ENCODE measurements at regions of chr14 and their contacts with region 1.

Region 1: DNA sequence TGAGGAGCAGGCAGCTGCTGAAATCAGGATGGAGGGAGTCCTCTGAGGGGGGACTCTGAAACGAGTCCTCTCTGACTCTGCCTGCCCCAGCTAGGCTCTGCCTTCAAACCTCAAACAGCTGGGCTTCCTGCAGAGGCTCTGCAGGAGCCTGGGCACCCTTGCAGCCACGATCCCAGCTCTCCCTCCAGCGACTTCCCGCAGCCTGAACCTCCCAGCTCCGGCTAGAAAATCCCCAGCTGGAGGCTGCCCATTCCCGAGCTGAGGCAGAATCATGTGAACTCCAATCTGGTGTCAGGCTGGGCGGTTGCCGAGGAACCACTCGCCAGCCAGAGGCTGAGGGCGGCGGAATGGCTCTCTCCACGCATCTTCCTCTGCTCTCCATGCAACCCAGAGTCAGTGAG is at the start of gene GPR68:
- DNase-seq: peak; percentile 51
- H3K4me3 Mint-ChIP-seq: peak within 1 kb of the TSS; percentile 73
- H3K27ac Mint-ChIP-seq: peak within 1 kb of the TSS; percentile 84
- H3K4me1 Mint-ChIP-seq: peaks cover 93% of the 10 kb centered on the region
- H3K27me3 Mint-ChIP-seq: no peaks in the 10 kb centered on the region
- total RNA-seq, gene GPR68: 6.5 to 6.9 TPM

Region 2: GRCh38 chr14:91114079-91115065 is 130.1 kb before region 1 on chr14:
- CTCF ChIA-PET with region 1: interaction called, 4 read pairs
- POLR2A ChIA-PET with region 1: interaction called, 23 read pairs
- intact Hi-C with region 1: no loop called
- DNase-seq: peak; percentile 81
- H3K4me3 Mint-ChIP-seq: peak overlapping the region; percentile 83
- H3K27ac Mint-ChIP-seq: peak overlapping the region; percentile 94
- H3K4me1 Mint-ChIP-seq: peaks cover 66% of the 10 kb centered on the region
- H3K27me3 Mint-ChIP-seq: no peaks in the 10 kb centered on the region

Region 3: DNA sequence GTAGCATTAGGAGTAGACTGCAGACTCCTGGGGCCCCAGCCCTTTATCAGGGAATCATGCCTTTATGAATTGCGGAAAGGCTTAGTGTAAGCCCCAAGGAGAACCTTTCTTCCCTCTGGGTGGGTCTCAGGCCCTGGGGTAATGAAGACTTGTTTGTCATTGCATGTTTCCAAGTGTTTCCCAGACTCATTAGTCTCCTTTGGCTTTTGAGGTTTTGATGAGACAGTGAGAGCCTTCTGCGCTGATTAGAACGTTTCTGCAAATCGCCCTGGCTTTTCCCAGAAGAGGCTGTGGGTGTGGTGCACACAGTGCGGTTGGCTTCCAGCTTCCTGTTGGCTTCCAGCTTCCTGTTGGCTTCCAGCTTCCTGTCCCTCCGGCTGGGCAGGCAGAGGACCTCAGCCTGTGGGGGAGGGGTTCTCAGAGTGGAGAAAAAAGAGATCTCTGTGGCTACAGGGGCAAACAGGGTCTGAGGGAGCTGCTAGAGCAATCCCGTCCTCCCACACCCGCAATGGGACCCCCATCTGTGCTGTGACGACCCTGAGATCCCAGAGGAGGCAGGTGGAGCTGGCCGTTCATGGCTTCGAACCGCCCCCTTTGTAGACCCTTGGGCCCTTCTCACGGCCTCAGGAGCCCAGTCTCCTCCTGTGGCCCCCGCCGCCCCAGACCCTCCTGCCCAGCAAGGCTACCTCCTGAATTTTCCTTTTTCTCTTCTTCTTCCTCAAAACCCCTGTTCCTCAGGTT is 42.1 kb before region 1 on chr14:
- CTCF ChIA-PET with region 1: no interaction called
- POLR2A ChIA-PET with region 1: no interaction called
- intact Hi-C with region 1: no loop called
- DNase-seq: peak; percentile 31
- H3K4me3 Mint-ChIP-seq: no peak overlapping the region
- H3K27ac Mint-ChIP-seq: peak overlapping the region; percentile 39
- H3K4me1 Mint-ChIP-seq: peaks cover 33% of the 10 kb centered on the region
- H3K27me3 Mint-ChIP-seq: no peaks in the 10 kb centered on the region

Region 4: GRCh38 chr14:91223028-91223783 is 21.3 kb before region 1 on chr14:
- CTCF ChIA-PET with region 1: interaction called, 71 read pairs
- POLR2A ChIA-PET with region 1: interaction called, 325 read pairs
- intact Hi-C with region 1: loop called (anchors 1 kb)
- DNase-seq: peak; percentile 51
- H3K4me3 Mint-ChIP-seq: no peak overlapping the region
- H3K27ac Mint-ChIP-seq: peak overlapping the region; percentile 80
- H3K4me1 Mint-ChIP-seq: peaks cover 76% of the 10 kb centered on the region
- H3K27me3 Mint-ChIP-seq: no peaks in the 10 kb centered on the region

Region 5: GRCh38 chr14:91258011-91258618 is 13.6 kb after region 1 on chr14:
- CTCF ChIA-PET with region 1: interaction called, 12 read pairs
- POLR2A ChIA-PET with region 1: interaction called, 68 read pairs
- intact Hi-C with region 1: loop called (anchors 2 kb)
- DNase-seq: peak; percentile 53
- H3K4me3 Mint-ChIP-seq: peak overlapping the region; percentile 9
- H3K27ac Mint-ChIP-seq: peak overlapping the region; percentile 69
- H3K4me1 Mint-ChIP-seq: peaks cover 69% of the 10 kb centered on the region
- H3K27me3 Mint-ChIP-seq: no peaks in the 10 kb centered on the region

Region 6: DNA sequence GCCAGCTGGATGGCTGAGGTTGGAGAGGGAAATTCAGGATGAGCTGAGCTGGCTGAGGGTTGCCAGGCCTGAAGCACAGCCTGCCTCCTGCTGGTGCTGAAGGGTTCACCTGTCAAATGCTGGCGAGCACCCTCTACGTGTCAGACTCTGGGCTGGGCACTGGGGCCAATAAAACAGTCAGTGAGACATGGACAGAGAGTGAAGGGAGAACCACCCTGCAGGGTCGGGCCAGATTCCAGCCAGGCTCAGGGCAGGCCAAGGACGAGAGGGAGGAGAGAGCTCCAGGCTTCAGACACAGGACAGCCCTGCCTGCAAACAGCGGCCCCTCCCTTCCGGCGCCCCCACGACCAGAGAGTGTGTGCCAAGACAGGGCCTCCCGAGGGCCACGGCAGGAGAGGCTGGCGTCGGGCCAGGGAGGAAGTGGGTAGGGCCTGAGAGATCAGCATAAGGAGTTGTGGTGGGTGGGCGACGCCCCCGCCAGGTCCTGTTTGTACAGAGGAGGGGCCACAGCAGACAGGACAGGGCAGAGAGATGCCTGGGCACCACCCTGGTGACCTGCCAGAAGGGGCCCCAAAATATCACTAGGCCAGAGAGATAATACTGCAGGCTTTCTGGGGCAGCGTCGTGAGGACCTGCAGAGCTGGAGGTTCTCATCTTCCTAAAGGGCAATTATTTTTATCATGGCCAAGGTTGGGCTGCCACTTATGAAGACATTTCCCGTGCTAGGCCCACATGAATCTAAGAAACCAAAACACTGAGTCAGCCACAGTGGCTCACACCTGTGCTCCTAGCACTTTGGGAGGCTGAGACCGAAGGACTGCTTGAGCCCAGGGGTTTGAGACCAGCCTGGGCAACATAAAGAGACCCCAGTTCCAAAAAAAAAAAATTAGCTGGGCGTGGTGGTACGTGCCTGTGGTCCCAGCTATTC is 73.1 kb after region 1 on chr14:
- CTCF ChIA-PET with region 1: no interaction called
- POLR2A ChIA-PET with region 1: no interaction called
- intact Hi-C with region 1: loop called (anchors 1 kb)
- DNase-seq: peak; percentile 92
- H3K4me3 Mint-ChIP-seq: peak overlapping the region; percentile 60
- H3K27ac Mint-ChIP-seq: peak overlapping the region; percentile 94
- H3K4me1 Mint-ChIP-seq: peaks cover 78% of the 10 kb centered on the region
- H3K27me3 Mint-ChIP-seq: no peaks in the 10 kb centered on the region

Region 7: DNA sequence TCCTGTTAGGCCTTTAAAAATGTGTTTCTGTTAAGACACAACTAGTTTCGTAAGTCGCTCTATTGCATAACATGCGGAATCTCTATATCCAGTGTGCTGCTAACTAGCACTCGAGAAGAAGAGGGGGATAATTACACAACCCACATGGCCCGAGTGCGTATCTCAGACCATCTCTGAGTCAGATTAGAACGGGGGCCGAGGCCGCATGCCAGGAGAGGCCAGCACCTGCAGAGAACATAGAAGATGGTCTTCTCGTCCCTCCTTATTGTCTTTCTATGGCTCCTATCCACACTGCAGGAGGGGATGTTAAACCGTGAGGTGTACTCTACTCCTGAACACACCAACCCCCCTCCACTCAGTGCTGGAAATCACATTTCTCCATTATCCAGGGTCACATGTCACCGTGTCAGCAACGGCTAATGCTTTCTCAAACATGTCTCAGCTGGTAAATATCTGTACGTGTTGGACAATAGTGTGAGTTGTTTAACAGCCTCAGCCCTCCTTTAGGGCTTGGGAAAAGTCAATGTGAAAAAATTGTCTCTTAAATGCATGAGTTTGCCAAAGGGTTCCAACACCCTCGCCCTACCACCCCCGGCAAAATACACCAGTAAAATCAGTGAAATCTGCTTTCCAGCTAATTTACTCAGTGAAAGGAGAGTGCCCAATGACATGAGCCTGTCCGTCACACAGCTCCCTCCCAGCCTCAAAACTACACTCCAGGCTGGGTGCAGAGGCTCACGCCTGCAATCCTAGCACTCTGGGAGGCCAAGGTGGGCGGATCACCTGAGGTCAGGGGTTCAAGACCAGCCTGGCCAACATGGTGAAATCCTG is 116.9 kb after region 1 on chr14:
- CTCF ChIA-PET with region 1: no interaction called
- POLR2A ChIA-PET with region 1: no interaction called
- intact Hi-C with region 1: no loop called
- DNase-seq: no peak
- H3K4me3 Mint-ChIP-seq: no peak overlapping the region
- H3K27ac Mint-ChIP-seq: no peak overlapping the region
- H3K4me1 Mint-ChIP-seq: peaks cover 65% of the 10 kb centered on the region
- H3K27me3 Mint-ChIP-seq: no peaks in the 10 kb centered on the region

Region 8: GRCh38 chr14:91373591-91374254 is 129.2 kb after region 1 on chr14:
- CTCF ChIA-PET with region 1: no interaction called
- POLR2A ChIA-PET with region 1: no interaction called
- intact Hi-C with region 1: loop called (anchors 5 kb)
- DNase-seq: peak; percentile 78
- H3K4me3 Mint-ChIP-seq: peak overlapping the region; percentile 59
- H3K27ac Mint-ChIP-seq: peak overlapping the region; percentile 86
- H3K4me1 Mint-ChIP-seq: peaks cover 100% of the 10 kb centered on the region
- H3K27me3 Mint-ChIP-seq: no peaks in the 10 kb centered on the region